K562 (cell line): ENCODE measurements at regions of chr9 and their contacts with region 1.

Region 1: DNA sequence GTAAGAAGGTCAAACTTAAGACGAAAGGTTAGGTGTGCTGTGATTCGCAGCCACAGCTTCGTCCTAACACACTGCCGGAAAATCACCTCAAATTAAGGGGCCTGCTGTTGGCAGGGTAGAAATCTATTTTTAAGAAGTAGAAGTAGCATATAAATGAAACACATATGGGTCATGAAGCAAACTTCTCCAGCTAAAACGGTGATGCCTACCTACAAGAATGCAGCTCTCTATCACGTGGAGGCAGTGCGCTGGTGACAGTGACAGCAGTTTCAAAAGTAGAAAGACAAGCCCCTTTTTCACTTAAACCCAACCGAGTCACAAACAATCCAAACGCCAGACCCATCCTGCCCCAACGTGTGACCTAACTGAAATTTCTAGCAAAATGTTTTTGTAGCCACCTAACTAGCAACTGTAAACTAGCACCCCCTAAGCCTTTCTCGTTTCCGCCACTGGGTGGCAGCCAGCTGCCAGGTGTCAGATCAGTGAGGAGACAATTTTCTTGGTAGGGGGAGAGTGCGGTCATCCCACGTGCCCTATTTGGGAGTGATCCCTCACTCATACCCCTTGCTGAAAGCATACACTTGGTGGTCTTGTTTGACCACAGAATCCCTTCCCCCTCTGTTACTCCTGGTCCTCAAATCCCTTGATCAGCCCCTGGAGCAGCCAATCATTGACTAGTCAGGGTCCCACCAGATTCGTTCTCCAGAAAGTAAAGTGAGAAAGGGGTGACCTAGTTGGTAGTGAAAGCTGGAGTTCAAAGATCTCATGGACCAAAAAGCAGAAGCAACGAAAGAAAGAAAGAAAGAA is 71.8 kb upstream of the MAMDC2 start:
- DNase-seq: peak; percentile 49 to 55 (median 54)
- ATAC-seq: peak; percentile 75
- H3K4me3 ChIP-seq: no peak overlapping the region
- H3K27ac ChIP-seq: no peak overlapping the region
- H3K4me1 ChIP-seq: no peaks in the 10 kb centered on the region
- H3K27me3 ChIP-seq: no peaks in the 10 kb centered on the region; a peak in 2 of 5 replicates
- CTCF ChIP-seq: peak; percentile 72 to 77 (median 76)
- EP300 ChIP-seq: no peak
- POLR2A ChIP-seq: no peak
- RAD21 ChIP-seq: peak; percentile 45 to 69; a peak in 3 of 4 replicates

Region 2: GRCh38 chr9:70111042-70111602 is 139.3 kb after region 1 on chr9:
- CTCF ChIA-PET with region 1: interaction called, 4 read pairs
- POLR2A ChIA-PET with region 1: no interaction called
- in situ Hi-C with region 1: loop called (anchors 10 kb)
- intact Hi-C with region 1: loop called (anchors 2 kb)
- DNase-seq: peak; percentile 41 to 65 (median 60)
- ATAC-seq: peak; percentile 85
- H3K4me3 ChIP-seq: no peak overlapping the region
- H3K27ac ChIP-seq: no peak overlapping the region
- H3K4me1 ChIP-seq: no peaks in the 10 kb centered on the region
- H3K27me3 ChIP-seq: no peaks in the 10 kb centered on the region
- CTCF ChIP-seq: peak; percentile 64 to 80 (median 70)
- EP300 ChIP-seq: no peak
- POLR2A ChIP-seq: no peak
- RAD21 ChIP-seq: peak; percentile 45 to 58

Region 3: DNA sequence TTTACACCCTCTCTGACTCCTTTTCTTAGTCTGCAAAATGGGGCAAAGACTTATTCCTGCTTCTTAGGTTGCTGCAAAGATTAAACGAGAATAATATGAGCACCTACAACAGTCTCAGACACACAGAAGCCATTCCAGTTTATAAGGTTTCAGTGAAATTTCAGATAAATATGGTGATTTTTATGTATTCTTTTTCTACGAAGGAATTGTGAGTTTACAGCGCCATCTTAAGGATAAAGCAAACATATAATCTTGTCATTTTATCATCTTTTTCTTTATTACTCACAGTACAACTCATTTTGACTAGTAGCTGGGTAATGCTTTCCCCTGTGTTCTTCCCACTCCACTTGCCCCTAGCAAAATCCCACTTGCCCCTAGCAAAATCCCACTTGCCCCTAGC is 257.7 kb after region 1 on chr9:
- CTCF ChIA-PET with region 1: no interaction called
- POLR2A ChIA-PET with region 1: no interaction called
- in situ Hi-C with region 1: no loop called
- intact Hi-C with region 1: loop called (anchors 2 kb)
- DNase-seq: peak in 1 of 4 experiments; percentile 11
- ATAC-seq: peak; percentile 51
- H3K4me3 ChIP-seq: no peak overlapping the region
- H3K27ac ChIP-seq: no peak overlapping the region
- H3K4me1 ChIP-seq: no peaks in the 10 kb centered on the region; a peak in 1 of 5 replicates
- H3K27me3 ChIP-seq: no peaks in the 10 kb centered on the region; a peak in 1 of 5 replicates
- CTCF ChIP-seq: peak; percentile 15 to 52 (median 27); a peak in 3 of 6 replicates
- EP300 ChIP-seq: no peak
- POLR2A ChIP-seq: no peak
- RAD21 ChIP-seq: peak; percentile 13 to 60; a peak in 2 of 4 replicates

Region 4: DNA sequence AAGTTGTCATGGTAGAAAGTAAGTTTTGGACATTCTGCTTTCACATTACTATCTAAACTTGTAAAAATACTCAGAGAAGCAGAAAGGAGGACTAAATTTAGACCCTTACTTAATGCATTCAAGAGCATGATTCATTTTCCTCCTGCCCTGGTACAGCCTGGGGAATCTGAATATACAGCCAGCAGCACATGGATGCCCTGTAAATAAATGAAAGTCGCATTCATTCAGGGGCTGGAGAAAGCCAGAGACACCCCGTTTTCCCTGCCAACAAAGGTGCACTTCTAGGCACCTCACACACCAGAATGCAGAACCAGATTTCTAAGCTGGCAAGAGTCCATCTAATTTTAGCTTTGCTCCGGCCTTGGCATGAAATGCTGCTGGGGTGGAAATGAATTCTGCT is 615.4 kb after region 1 on chr9:
- CTCF ChIA-PET with region 1: no interaction called
- POLR2A ChIA-PET with region 1: no interaction called
- in situ Hi-C with region 1: loop called (anchors 25 kb)
- intact Hi-C with region 1: no loop called
- DNase-seq: no peak
- ATAC-seq: no peak
- H3K4me3 ChIP-seq: no peak overlapping the region
- H3K27ac ChIP-seq: no peak overlapping the region
- H3K4me1 ChIP-seq: no peaks in the 10 kb centered on the region
- H3K27me3 ChIP-seq: peaks cover 0 to 21% of the 10 kb centered on the region in 2 experiments; a peak in 3 of 5 replicates
- CTCF ChIP-seq: no peak
- EP300 ChIP-seq: no peak
- POLR2A ChIP-seq: no peak
- RAD21 ChIP-seq: no peak